ENCODE measurements at regions of chr5 and their contacts with region 1.

Region 1: DNA sequence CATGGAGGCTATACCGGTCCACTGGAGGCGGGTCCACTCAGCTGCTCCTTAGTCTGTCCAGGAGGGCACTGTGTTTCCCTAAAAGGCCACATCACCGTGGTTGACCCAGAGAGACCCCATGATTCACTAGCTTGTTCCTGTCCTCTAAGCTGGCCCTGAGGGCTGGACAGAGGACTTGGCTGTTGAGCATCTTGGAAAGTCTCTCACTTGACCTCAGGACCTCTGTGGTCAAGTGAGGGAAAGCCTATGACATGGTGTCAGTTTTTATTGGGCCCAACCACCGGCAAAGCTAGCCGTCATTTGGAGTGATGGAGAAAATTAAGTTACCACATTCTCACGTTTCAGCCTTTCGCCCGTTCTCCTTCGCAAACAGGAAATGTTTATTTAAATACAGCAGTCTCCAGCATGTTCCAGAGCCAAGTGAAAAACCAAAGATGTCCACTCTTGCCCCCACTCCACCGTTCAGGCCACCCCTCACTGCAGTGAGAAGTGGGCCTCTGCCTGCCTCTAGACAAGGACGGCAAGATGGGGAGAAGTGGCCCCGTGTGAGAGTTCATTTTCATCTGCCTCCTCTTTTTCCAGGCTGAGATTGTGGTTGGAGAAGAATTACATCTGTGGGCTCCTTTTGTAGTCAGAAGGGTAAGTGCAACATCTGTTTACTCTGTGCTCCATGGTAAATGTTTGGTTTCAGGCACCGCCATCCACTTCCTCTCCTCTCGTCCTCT is 4.4 kb downstream of the SLIT3 start:
- DNase-seq: no peak
- H3K4me3 ChIP-seq: no peak overlapping the region
- H3K27ac ChIP-seq: no peak overlapping the region
- H3K4me1 ChIP-seq: no peaks in the 10 kb centered on the region
- H3K27me3 ChIP-seq: no peaks in the 10 kb centered on the region
- CTCF ChIP-seq: no peak
- POLR2A ChIP-seq: no peak

Region 2: DNA sequence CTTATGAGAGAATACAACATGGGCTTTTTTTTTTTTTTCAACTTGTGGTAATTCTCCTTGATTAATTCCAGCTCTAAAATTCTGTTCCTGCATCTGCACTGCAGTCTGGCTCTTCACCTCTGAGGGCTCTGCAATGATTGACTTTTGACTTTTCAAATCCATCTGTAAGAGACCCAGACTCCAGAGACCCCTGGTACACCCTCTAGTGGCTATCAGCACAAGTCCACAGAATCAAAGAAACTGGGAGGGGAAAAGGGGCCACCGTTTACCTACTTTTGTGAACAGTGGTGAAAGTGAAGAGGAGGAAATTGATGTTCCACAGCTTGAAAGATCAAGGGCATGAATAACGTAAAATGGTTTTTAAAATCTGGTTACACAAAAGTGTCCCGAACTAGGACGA is 147.3 kb before region 1 on chr5:
- intact Hi-C with region 1: loop called (anchors 10 kb)
- DNase-seq: no peak
- H3K4me3 ChIP-seq: no peak overlapping the region
- H3K27ac ChIP-seq: no peak overlapping the region
- H3K4me1 ChIP-seq: no peaks in the 10 kb centered on the region
- H3K27me3 ChIP-seq: no peaks in the 10 kb centered on the region
- CTCF ChIP-seq: no peak
- POLR2A ChIP-seq: no peak

Region 3: GRCh38 chr5:169251333-169252084 is 45.1 kb before region 1 on chr5:
- intact Hi-C with region 1: no loop called
- DNase-seq: no peak
- H3K4me3 ChIP-seq: no peak overlapping the region
- H3K27ac ChIP-seq: no peak overlapping the region
- H3K4me1 ChIP-seq: no peaks in the 10 kb centered on the region
- H3K27me3 ChIP-seq: no peaks in the 10 kb centered on the region
- CTCF ChIP-seq: no peak
- POLR2A ChIP-seq: no peak

Measured in prostate gland (tissue), 2 donors.